Activated B cell treated with CpG ODN at 0.5 μM for 24 hours (primary cell): ENCODE measurements at regions of chr1 and their contacts with region 1.

Region 1: GRCh38 chr1:205458777-205459566 is 3.1 kb upstream of the BLACAT1 start:
- DNase-seq: no peak
- ATAC-seq: peak; percentile 56
- H3K4me3 Mint-ChIP-seq: no peak overlapping the region
- H3K27ac Mint-ChIP-seq: no peak overlapping the region
- H3K4me1 Mint-ChIP-seq: peaks cover 19% of the 10 kb centered on the region
- H3K27me3 Mint-ChIP-seq: peaks cover 42% of the 10 kb centered on the region
- CTCF ChIP-seq: no peak

Region 2: DNA sequence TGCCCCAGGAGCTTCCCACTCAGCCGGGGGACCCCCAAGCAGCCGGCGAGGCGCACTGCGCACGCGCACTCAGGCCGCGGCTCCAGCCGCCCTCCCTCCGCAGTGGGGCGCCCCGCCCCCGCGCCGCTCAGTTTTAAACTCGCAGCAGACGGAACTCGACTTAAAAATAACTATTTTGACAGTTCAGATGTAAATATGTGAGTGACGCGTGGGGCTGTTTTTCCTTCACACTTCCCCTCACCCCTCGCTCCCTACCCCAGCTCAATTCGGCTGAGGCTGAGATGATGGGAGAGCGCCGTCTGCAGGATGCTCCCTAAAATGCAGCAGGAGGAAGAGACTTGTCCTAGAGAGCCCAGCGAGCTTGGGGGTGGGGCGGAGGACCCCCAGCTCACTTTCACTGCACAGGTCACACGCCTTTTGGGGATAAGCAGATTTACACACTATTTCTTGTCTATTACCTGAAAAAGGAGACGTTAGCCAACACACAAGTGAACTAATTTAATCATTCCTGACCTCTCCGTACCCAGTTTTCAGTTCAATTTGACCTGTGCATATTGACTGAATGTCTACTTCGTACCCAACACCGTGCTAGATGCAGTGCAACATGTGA is 28.2 kb before region 1 on chr1:
- CTCF ChIA-PET with region 1: interaction called, 3 read pairs
- POLR2A ChIA-PET with region 1: no interaction called
- intact Hi-C with region 1: loop called (anchors 2 kb)
- DNase-seq: peak; percentile 67
- ATAC-seq: peak; percentile 85
- H3K4me3 Mint-ChIP-seq: peak overlapping the region; percentile 84
- H3K27ac Mint-ChIP-seq: peak overlapping the region; percentile 55
- H3K4me1 Mint-ChIP-seq: peaks cover 39% of the 10 kb centered on the region
- H3K27me3 Mint-ChIP-seq: no peaks in the 10 kb centered on the region
- CTCF ChIP-seq: no peak

Region 3: DNA sequence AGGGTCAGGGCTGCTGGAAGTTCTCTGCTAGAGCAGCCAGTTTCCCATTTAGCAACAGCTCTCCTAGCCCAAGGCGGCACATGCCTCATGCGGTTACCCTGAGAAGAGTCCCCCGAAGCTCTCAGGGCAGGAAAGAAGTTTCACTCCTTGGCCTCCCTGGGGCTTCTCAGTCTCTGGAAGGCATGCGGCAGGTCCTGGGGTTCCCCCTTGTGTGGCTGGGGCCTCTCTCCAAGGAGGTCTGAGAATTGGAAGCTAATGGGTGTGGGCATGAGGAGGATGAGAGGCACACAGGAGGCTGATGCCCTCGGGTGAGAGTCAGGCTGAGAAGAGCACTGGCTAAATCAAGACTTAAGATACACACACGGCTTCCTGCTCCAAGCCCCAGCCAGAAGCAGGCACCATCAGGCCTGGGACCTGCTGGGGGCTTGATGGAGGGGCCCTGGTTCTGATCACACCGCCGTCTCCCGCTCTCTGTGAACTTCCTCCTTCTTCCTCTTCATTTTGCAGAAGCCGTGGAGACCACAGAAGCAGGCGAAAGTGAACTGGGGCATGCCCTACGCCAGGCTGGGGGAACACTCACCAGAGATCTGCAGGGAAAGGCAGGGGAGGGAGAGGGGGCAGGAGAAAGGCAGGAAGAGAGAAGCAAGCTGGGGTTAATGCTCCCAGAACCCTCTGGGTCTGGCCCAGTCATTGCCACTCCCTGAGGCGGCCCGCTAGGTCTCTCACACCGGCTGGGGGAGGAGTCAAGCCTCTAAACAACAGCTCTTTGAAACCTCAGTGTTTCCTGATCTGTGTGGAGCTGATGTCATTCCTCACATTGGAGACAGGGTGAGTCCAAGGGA is 18.3 kb before region 1 on chr1:
- CTCF ChIA-PET with region 1: no interaction called
- POLR2A ChIA-PET with region 1: interaction called, 4 read pairs
- intact Hi-C with region 1: loop called (anchors 2 kb)
- DNase-seq: peak; percentile 41
- ATAC-seq: peak; percentile 84
- H3K4me3 Mint-ChIP-seq: peak overlapping the region; percentile 82
- H3K27ac Mint-ChIP-seq: peak overlapping the region; percentile 79
- H3K4me1 Mint-ChIP-seq: peaks cover 58% of the 10 kb centered on the region
- H3K27me3 Mint-ChIP-seq: no peaks in the 10 kb centered on the region
- CTCF ChIP-seq: no peak